Gastrocnemius medialis (tissue), 4 donors: ENCODE measurements at regions of chr3 and their contacts with region 1.

Region 1: DNA sequence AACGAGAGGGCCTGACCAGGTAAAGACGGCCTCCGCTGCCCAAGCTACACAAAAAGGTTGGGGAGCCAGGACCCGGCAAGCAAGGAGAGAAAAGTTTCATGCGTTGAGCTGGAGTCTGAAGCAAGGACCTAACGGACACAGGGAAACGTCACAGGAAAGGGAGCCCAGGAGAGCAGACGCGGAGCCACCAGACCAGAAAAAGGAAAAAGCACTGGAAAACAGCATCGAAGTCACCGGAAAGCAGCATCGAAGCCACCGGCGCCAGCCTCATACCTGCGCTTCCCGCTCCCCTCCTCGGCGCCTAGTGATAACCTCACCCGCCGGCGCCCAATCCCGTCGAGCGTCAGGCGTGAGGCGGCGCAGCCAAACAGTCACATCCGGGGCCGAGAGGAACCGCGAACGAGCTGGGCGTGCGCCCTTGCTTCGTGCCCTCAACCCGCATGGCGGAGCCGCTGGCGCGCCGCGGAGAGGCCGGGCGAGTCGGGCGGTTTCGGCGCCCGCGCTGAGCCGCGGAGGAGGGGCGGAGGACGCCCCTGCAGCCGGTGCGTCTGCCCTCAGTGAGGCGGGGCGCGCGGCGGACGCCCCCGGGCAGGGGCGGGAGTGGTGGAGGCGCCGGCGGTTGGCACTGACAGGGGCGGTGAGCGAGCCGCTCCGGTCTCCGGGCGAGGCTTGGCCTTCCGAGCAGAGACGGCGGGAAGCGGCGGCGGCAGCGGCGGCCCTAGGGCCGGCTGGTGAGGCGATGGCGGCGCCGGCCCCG is at the starts of genes FBXO45 and WDR53:
- DNase-seq: peak; percentile 90 to 91
- ATAC-seq: peak; percentile 95 to 96
- H3K4me3 ChIP-seq: peak within 1 kb of the TSS; percentile 82 to 98 (median 88)
- H3K27ac ChIP-seq: peak within 1 kb of the TSS; percentile 81 to 92 (median 89)
- H3K4me1 ChIP-seq: peaks cover 19 to 23% of the 10 kb centered on the region in 2 donors
- H3K27me3 ChIP-seq: no peaks in the 10 kb centered on the region
- CTCF ChIP-seq: peak in 1 of 5 experiments; percentile 11
- POLR2A ChIP-seq: peak; percentile 75 to 88
- total RNA-seq, gene FBXO45: 9.6 to 20.8 (median 12.1) TPM
- total RNA-seq, gene WDR53: 4.8 to 8.3 (median 6.7) TPM

Region 2: DNA sequence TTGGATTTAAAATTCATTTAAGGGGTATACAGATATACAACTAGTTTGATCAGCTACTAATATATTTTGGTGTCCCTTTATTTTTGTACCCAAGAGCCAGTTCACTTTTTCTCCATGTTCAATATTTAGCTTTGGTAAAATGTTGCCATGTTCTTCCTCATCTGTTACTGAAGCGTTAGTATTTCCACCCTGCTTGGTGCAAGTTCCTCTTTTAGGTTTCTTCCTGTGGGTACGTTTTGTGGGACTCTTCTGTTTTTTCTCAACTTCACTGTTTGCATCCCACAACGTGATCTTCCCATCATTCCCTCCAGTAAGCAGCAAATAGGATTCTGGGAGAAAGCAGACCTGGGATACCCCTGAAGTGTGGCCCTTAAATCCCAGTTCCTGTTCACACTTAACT is 14.2 kb before region 1 on chr3:
- in situ Hi-C with region 1: no loop called
- intact Hi-C with region 1: loop called (anchors 1 kb)
- DNase-seq: no peak
- ATAC-seq: no peak
- H3K4me3 ChIP-seq: no peak overlapping the region
- H3K27ac ChIP-seq: peak overlapping the region; percentile 75 to 86 (median 81)
- H3K4me1 ChIP-seq: peaks cover 17% of the 10 kb centered on the region in 2 donors
- H3K27me3 ChIP-seq: no peaks in the 10 kb centered on the region
- CTCF ChIP-seq: no peak
- POLR2A ChIP-seq: no peak

Region 3: GRCh38 chr3:196942226-196942914 is 373.9 kb after region 1 on chr3 and contains the start of gene NCBP2:
- in situ Hi-C with region 1: loop called in 1 of 4 experiments (anchors 25 kb)
- intact Hi-C with region 1: loop called (anchors 2 kb)
- DNase-seq: peak; percentile 96 to 98
- ATAC-seq: peak; percentile 94 to 97
- H3K4me3 ChIP-seq: peak within 1 kb of the TSS; percentile 93 to 99 (median 98)
- H3K27ac ChIP-seq: peak within 1 kb of the TSS; percentile 88 to 93 (median 92)
- H3K4me1 ChIP-seq: peaks cover 27 to 36% of the 10 kb centered on the region in 2 donors
- H3K27me3 ChIP-seq: no peaks in the 10 kb centered on the region
- CTCF ChIP-seq: peak; percentile 56 to 77 (median 64)
- POLR2A ChIP-seq: peak; percentile 83 to 90
- total RNA-seq, gene NCBP2: 23.4 to 29.9 (median 27.5) TPM

Region 4: GRCh38 chr3:197364410-197365071 is 796.1 kb after region 1 on chr3:
- in situ Hi-C with region 1: no loop called
- intact Hi-C with region 1: loop called (anchors 5 kb)
- DNase-seq: no peak
- ATAC-seq: no peak
- H3K4me3 ChIP-seq: no peak overlapping the region
- H3K27ac ChIP-seq: no peak overlapping the region
- H3K4me1 ChIP-seq: peaks cover 0 to 6% of the 10 kb centered on the region in 2 donors
- H3K27me3 ChIP-seq: no peaks in the 10 kb centered on the region
- CTCF ChIP-seq: no peak
- POLR2A ChIP-seq: no peak